ENCODE measurements at regions of chr21 and their contacts with region 1.

Region 1: GRCh38 chr21:28135646-28136045 is 857.0 kb downstream of the LTN1 start:
- DNase-seq: peak; percentile 76 to 93 (median 80)
- H3K4me3 ChIP-seq: peak overlapping the region in 1 of 3 experiments; percentile 54
- H3K4me3 Mint-ChIP-seq: peak overlapping the region in 1 of 2 donors; percentile 50
- H3K27ac ChIP-seq: peak overlapping the region; percentile 62 to 70
- H3K27ac Mint-ChIP-seq: peak overlapping the region; percentile 79 to 92 (median 84)
- H3K4me1 ChIP-seq: peaks cover 19 to 28% of the 10 kb centered on the region in 2 donors
- H3K4me1 Mint-ChIP-seq: peaks cover 18% of the 10 kb centered on the region
- H3K27me3 ChIP-seq: no peaks in the 10 kb centered on the region
- H3K27me3 Mint-ChIP-seq: peaks cover 0 to 2% (median 0%) of the 10 kb centered on the region in 3 donors
- CTCF ChIP-seq: no peak

Region 2: DNA sequence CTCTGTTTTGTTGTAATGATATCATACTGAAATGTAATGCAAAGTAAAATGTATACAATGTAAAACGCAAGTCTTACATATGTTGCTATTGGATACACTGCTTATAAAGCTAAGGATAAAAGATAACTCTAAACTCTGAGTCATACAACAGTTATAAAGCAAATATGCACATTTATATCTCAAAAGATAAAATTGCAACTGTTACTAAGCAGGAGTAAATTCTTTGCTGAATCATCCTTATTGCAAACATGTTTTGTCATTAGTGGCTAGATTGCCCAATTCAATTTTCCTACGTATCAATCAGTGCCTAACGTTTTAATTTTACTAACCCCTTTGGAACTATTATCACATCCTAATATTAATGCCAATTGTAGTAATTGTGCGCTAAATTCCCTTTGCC is 94.2 kb after region 1 on chr21:
- intact Hi-C with region 1: loop called (anchors 10 kb)
- DNase-seq: peak; percentile 35 to 75 (median 65)
- H3K4me3 ChIP-seq: peak overlapping the region in 1 of 3 experiments; percentile 21
- H3K4me3 Mint-ChIP-seq: no peak overlapping the region
- H3K27ac ChIP-seq: no peak overlapping the region
- H3K27ac Mint-ChIP-seq: peak overlapping the region in 2 of 7 donors; percentile 25 to 37
- H3K4me1 ChIP-seq: peaks cover 41 to 55% of the 10 kb centered on the region in 2 donors
- H3K4me1 Mint-ChIP-seq: peaks cover 42% of the 10 kb centered on the region
- H3K27me3 ChIP-seq: no peaks in the 10 kb centered on the region
- H3K27me3 Mint-ChIP-seq: peaks cover 0 to 5% (median 2%) of the 10 kb centered on the region in 3 donors
- CTCF ChIP-seq: no peak

Region 3: GRCh38 chr21:28235169-28235895 is 99.7 kb after region 1 on chr21:
- intact Hi-C with region 1: loop called in 1 of 2 experiments (anchors 10 kb)
- DNase-seq: peak; percentile 68 to 77 (median 70)
- H3K4me3 ChIP-seq: peak overlapping the region in 2 of 3 experiments; percentile 4 to 49
- H3K4me3 Mint-ChIP-seq: peak overlapping the region in 1 of 2 donors; percentile 62
- H3K27ac ChIP-seq: peak overlapping the region; percentile 75 to 77
- H3K27ac Mint-ChIP-seq: peak overlapping the region; percentile 79 to 95 (median 91)
- H3K4me1 ChIP-seq: peaks cover 36 to 39% of the 10 kb centered on the region in 2 donors
- H3K4me1 Mint-ChIP-seq: peaks cover 36% of the 10 kb centered on the region
- H3K27me3 ChIP-seq: no peaks in the 10 kb centered on the region
- H3K27me3 Mint-ChIP-seq: peaks cover 0 to 4% (median 2%) of the 10 kb centered on the region in 3 donors
- CTCF ChIP-seq: peak; percentile 52

Measured in CD14-positive monocyte (primary cell).